ENCODE measurements at regions of chr4 and their contacts with region 1.

Region 1: DNA sequence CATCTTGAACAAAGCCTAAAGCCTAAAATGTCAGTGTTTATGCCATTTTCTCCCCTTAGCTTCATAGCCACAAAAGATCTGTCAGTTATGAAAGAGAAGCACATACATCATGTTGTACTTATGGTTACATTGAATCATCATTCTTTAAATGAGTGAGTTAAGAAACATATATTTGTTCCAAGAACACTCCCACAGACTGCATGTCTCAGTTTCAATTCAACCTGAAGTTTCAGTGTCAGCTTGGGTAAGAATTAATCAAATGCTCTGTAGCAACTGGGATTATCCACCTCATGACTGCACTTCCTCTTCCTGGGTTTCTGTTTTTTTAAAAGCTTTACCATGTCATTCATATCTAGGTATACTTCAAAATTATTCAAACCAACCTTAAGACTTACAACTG is 3.9 kb upstream of the TMPRSS11B start:
- DNase-seq: no peak
- H3K4me3 Mint-ChIP-seq: peak overlapping the region; percentile 62
- H3K27ac Mint-ChIP-seq: peak overlapping the region; percentile 97
- H3K4me1 Mint-ChIP-seq: peaks cover 14% of the 10 kb centered on the region
- H3K27me3 Mint-ChIP-seq: no peaks in the 10 kb centered on the region

Region 2: DNA sequence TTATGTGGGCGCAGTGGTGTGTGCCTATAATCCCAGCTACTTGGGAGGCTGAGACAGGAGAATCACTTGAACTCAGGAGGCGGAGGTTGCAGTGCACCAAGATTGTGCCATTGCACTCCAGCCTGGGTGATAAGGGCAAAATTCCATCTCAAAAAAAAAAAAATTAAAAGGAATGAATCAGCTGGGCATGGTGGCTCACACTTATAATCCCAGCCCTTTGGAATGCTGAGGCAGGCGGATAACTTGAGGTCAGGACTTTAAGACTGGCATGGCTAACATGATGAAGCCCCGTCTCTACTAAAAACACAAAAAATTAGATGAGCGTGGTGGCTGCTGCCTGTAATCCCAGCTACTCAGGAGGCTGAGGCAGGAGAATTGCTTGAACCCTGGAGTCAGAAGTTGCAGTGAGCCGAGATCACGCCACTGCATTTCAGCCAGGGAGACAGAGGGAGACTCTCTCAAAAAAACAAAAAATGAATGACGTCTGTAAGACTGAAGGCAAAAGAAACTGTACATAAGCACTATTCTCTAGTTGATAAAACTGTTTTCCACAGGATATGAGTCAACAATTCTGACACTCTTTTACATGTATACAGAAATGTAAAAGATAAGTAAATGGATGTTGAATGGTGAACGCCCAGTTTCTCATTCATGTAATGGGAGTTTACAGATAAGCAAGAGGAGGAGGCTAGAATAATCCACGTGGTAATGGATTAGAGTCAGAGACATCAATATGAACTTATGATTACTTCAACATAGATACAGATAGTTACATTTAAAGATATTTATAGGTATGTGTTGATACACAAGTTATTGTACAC is 726.4 kb before region 1 on chr4:
- intact Hi-C with region 1: loop called (anchors 1 kb)
- DNase-seq: no peak
- H3K4me3 Mint-ChIP-seq: peak overlapping the region; percentile 45
- H3K27ac Mint-ChIP-seq: peak overlapping the region; percentile 96
- H3K4me1 Mint-ChIP-seq: peaks cover 60% of the 10 kb centered on the region
- H3K27me3 Mint-ChIP-seq: no peaks in the 10 kb centered on the region

Region 3: GRCh38 chr4:67779631-67780030 is 469.8 kb before region 1 on chr4:
- intact Hi-C with region 1: no loop called
- DNase-seq: no peak
- H3K4me3 Mint-ChIP-seq: no peak overlapping the region
- H3K27ac Mint-ChIP-seq: no peak overlapping the region
- H3K4me1 Mint-ChIP-seq: peaks cover 11% of the 10 kb centered on the region
- H3K27me3 Mint-ChIP-seq: no peaks in the 10 kb centered on the region

Region 4: DNA sequence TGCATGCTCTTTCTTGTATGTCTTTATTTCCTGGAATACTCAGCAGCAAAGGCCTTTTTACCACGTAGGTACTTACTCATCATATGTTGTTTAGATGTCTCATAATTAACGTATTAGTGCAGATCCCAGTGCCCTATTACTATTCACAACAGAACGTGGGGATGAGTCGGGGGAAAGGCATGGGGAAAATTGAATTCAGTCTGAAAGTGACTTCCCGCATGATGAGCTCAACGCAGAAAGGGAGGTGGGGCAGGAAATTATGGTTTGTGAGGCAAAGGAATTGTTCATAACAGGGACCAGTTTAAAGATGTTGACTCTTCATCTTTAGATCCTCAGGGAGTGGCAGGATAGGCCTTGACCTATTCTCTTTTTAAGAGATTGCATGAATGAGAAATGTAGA is 363.7 kb before region 1 on chr4:
- intact Hi-C with region 1: no loop called
- DNase-seq: no peak
- H3K4me3 Mint-ChIP-seq: no peak overlapping the region
- H3K27ac Mint-ChIP-seq: no peak overlapping the region
- H3K4me1 Mint-ChIP-seq: no peaks in the 10 kb centered on the region
- H3K27me3 Mint-ChIP-seq: peaks cover 4% of the 10 kb centered on the region

Region 5: DNA sequence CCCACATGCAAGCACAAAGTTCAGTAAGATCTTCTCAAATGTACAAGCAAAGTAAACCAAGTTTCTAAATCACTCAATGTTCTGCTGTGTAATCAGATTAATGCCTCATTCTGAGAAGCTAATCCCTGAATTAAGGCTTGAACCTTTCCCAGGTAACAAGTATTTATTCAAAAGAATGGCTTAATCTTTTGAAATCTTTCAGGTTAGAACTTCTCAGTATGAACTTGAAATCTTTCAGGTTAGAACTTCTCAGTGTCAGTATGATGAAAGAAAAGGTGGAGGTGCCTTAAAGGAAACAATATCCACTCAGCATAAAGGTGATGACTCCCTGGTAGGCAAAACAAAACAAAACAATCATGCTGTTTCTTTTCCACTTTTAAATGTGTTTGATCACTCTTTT is 32.9 kb before region 1 on chr4:
- intact Hi-C with region 1: loop called (anchors 1 kb)
- DNase-seq: no peak
- H3K4me3 Mint-ChIP-seq: no peak overlapping the region
- H3K27ac Mint-ChIP-seq: peak overlapping the region; percentile 54
- H3K4me1 Mint-ChIP-seq: peaks cover 23% of the 10 kb centered on the region
- H3K27me3 Mint-ChIP-seq: no peaks in the 10 kb centered on the region

Region 6: GRCh38 chr4:68271851-68272756 is 22.7 kb after region 1 on chr4:
- intact Hi-C with region 1: loop called (anchors 1 kb)
- DNase-seq: no peak
- H3K4me3 Mint-ChIP-seq: peak overlapping the region; percentile 33
- H3K27ac Mint-ChIP-seq: no peak overlapping the region
- H3K4me1 Mint-ChIP-seq: peaks cover 12% of the 10 kb centered on the region
- H3K27me3 Mint-ChIP-seq: no peaks in the 10 kb centered on the region

Region 7: GRCh38 chr4:68349649-68350360 is 100.4 kb after region 1 on chr4 and contains the start of gene YTHDC1:
- intact Hi-C with region 1: loop called (anchors 1 kb)
- DNase-seq: peak; percentile 89
- H3K4me3 Mint-ChIP-seq: peak within 1 kb of the TSS; percentile 97
- H3K27ac Mint-ChIP-seq: peak within 1 kb of the TSS; percentile 97
- H3K4me1 Mint-ChIP-seq: peaks cover 31% of the 10 kb centered on the region
- H3K27me3 Mint-ChIP-seq: no peaks in the 10 kb centered on the region
- total RNA-seq, gene YTHDC1: 79.9 and 83.6 TPM in 2 replicates

Region 8: DNA sequence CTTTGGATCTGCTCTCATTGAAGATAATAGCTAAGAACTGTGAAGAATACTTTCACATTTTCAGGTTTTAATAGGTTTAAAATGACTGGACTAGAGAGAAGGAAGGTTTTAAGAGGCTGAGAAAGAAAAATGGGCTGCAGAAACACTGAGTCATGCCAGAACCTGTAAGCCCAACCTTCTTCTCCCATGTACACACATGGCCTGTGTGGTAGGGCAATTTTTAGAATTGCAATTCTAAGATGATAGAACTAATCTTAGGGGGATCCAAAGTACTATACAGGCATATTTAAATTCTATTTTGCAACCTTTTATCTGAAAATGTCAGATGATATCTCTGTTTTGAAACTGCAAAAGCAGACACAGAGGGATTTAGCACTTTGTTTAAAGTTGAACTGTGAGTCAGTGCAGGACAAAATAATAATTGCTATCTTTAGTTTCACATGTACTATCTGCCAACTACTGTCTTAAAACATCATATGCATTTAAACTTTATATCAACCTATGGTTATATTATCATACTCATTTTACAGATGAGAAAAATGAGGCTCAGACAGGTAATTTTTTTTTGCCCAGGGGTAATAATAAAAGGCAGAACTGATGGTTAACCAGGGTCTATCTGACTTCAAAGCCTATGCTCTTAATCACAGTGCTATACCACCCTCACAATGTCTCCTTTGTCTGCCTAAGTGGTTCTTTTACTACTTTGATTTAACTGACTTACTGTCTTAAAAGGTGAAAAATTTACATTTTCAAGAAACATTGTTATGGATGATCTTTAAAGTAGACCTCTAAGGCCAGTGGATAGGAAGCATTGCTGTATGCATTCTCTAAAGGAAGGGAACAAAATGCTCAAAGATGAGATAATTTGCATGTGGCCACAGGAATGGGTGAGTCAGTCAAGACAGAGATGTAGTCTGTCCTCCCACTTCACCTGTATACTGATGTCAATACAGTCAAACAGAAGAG is 202.1 kb after region 1 on chr4:
- intact Hi-C with region 1: loop called (anchors 10 kb)
- DNase-seq: no peak
- H3K4me3 Mint-ChIP-seq: no peak overlapping the region
- H3K27ac Mint-ChIP-seq: peak overlapping the region; percentile 9
- H3K4me1 Mint-ChIP-seq: peaks cover 29% of the 10 kb centered on the region
- H3K27me3 Mint-ChIP-seq: peaks cover 10% of the 10 kb centered on the region